HCT116 (cell line): ENCODE measurements at regions of chr2 and their contacts with region 1.

Region 1: DNA sequence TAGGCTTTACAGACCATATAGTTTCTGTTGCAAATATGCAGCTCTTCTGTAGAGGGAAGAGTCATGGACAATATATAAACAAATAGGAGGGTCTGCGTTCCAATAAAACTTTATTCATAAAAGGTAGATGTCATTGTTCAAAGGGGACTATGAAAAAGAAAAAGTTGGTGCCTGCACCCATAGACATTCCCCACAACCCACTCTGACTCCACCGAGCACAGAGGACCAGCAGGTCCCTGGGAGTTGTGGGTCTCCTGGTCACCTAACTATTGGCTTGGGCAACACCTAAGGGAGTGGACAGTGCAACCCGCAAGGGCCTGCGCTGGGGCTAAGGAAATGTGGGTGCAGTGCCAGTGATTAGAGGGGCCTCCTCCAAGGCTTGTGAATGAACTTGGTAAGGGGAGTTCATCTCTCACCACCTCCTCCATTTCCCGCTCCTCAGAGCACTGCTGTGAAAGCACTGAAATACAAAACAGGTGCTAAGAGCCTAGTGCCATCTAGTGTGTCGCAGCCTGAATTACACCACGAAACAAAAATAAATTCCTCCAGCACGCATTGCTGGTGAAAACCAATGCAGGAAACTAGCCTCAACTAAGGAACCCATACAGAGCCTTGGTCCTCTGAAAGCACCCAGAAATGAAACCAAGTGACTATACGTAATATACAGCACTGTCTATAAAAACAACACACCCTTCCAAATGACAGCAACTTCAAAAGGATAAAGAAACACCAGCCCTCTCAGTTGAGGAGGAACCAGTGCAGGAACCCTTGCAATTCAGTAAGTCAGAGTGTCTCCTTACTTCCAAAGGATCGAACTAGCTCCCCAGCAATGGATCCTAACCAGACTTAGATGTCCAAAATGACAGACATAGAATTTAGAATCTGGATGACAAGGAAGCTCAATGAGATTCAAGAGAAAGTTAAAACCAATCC is 166.6 kb downstream of the RNF144A start:
- DNase-seq: peak; percentile 32
- ATAC-seq: peak; percentile 95
- H3K4me3 ChIP-seq: no peak overlapping the region
- H3K27ac ChIP-seq: no peak overlapping the region
- H3K4me1 ChIP-seq: no peaks in the 10 kb centered on the region
- H3K27me3 ChIP-seq: no peaks in the 10 kb centered on the region
- CTCF ChIP-seq: peak; percentile 72 to 78 (median 72)
- POLR2A ChIP-seq: no peak
- RAD21 ChIP-seq: peak; percentile 75

Region 2: GRCh38 chr2:6826081-6826913 is 257.5 kb before region 1 on chr2:
- CTCF ChIA-PET with region 1: no interaction called
- POLR2A ChIA-PET with region 1: no interaction called
- RAD21 ChIA-PET with region 1: no interaction called
- intact Hi-C with region 1: loop called (anchors 5 kb)
- DNase-seq: peak; percentile 71
- ATAC-seq: peak; percentile 93
- H3K4me3 ChIP-seq: no peak overlapping the region
- H3K27ac ChIP-seq: no peak overlapping the region
- H3K4me1 ChIP-seq: peaks cover 0 to 8% of the 10 kb centered on the region in 2 experiments; a peak in 2 of 4 replicates
- H3K27me3 ChIP-seq: peaks cover 10% of the 10 kb centered on the region; the same call in 1 of the 2 replicates
- CTCF ChIP-seq: peak; percentile 67 to 87 (median 78); a peak in 5 of 6 replicates
- POLR2A ChIP-seq: no peak
- RAD21 ChIP-seq: peak; percentile 75

Region 3: DNA sequence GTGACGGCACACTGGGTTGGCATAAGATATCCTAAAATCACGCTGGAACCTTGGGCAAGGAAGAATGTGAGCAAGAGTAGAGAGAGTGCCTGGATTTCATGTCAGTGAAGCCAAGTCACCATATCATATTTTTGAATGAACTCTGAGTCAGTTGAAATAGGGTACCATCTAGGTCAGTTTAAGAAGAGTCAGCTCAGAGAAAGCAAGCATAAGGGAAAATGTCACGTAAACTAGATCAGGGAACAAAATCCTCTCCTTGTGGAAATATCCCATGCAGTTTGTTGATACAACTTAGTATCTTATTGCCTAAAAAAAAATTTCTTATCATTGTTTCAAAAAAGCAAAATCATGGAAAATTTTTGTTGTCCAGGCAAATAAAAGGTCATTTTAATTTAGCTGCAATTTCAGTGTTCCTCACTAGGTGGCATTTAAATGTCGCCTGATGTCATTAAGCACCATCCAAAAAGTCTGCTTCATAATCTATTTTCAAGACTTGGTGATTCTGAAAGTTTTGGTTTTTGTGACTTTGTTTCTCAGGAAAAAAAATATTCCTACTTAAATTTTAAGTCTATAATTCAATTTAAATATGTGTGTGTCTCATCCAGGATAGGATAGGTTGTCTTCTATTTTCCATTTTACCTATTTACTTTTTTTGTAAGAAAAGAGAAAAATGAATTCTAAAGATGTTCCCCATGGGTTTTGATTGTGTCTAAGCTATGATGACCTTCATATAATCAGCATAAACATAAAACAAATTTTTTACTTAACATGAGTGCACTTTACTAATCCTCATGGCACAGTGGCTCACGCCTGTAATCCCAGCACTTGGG is 186.7 kb before region 1 on chr2:
- CTCF ChIA-PET with region 1: interaction called, 4 read pairs
- POLR2A ChIA-PET with region 1: no interaction called
- RAD21 ChIA-PET with region 1: interaction called in 1 of 2 experiments, 3 read pairs
- intact Hi-C with region 1: loop called (anchors 1 kb)
- DNase-seq: peak; percentile 26
- ATAC-seq: 0 out of 2 replicates have a peak, but pooled peaks have one; percentile 53
- H3K4me3 ChIP-seq: no peak overlapping the region
- H3K27ac ChIP-seq: no peak overlapping the region
- H3K4me1 ChIP-seq: no peaks in the 10 kb centered on the region
- H3K27me3 ChIP-seq: peaks cover 5% of the 10 kb centered on the region; the same call in 1 of the 2 replicates
- CTCF ChIP-seq: peak; percentile 47 to 80 (median 59); a peak in 5 of 6 replicates
- POLR2A ChIP-seq: no peak
- RAD21 ChIP-seq: peak; percentile 81

Region 4: GRCh38 chr2:7037340-7038333 is 46.2 kb before region 1 on chr2:
- CTCF ChIA-PET with region 1: no interaction called
- POLR2A ChIA-PET with region 1: no interaction called
- RAD21 ChIA-PET with region 1: no interaction called
- intact Hi-C with region 1: loop called (anchors 2 kb)
- DNase-seq: peak; percentile 10
- ATAC-seq: peak; percentile 95
- H3K4me3 ChIP-seq: no peak overlapping the region
- H3K27ac ChIP-seq: no peak overlapping the region
- H3K4me1 ChIP-seq: no peaks in the 10 kb centered on the region
- H3K27me3 ChIP-seq: no peaks in the 10 kb centered on the region
- CTCF ChIP-seq: peak; percentile 40 to 82 (median 74); a peak in 5 of 6 replicates
- POLR2A ChIP-seq: no peak
- RAD21 ChIP-seq: peak; percentile 53

Region 5: DNA sequence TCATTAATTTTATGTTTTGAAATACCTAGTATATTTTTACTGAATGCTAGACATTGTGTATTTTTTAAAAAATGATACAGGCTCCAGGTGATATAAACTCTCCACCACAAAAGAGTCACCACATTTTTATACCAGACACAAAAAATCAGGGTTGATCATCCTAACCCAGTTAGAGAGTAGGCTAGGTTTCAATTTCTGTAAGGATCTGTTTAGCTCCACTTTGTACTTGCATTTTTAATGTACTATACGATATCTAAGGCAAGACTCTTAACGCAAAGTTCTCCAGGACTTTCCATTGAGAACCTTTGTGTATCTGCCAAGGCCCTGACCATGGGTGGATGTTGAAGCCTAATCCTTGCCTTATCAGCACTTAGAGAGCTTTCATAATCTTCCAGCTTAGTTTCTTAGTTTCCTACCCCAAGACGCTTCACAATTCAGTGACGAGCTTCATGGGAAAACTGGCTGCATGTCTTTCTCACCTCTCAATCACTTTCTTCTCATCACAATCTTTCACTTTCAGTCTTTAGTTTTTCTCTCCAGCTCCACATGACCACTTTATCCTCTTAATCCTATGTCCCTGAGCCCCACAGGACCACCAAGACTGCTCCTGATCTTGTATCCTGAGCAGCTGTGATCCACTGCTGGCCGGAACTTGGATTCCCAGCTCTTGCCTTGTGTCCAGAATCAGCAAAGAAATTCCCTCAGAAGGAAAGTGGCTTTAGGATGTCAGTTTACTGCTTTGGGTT is 469.2 kb after region 1 on chr2:
- CTCF ChIA-PET with region 1: no interaction called
- POLR2A ChIA-PET with region 1: no interaction called
- RAD21 ChIA-PET with region 1: no interaction called
- intact Hi-C with region 1: no loop called
- DNase-seq: no peak
- ATAC-seq: no peak
- H3K4me3 ChIP-seq: no peak overlapping the region
- H3K27ac ChIP-seq: no peak overlapping the region
- H3K4me1 ChIP-seq: no peaks in the 10 kb centered on the region
- H3K27me3 ChIP-seq: no peaks in the 10 kb centered on the region
- CTCF ChIP-seq: no peak
- POLR2A ChIP-seq: no peak
- RAD21 ChIP-seq: no peak